CD4-positive, alpha-beta T cell (primary cell): ENCODE measurements at regions of chr4 and their contacts with region 1.

Region 1: DNA sequence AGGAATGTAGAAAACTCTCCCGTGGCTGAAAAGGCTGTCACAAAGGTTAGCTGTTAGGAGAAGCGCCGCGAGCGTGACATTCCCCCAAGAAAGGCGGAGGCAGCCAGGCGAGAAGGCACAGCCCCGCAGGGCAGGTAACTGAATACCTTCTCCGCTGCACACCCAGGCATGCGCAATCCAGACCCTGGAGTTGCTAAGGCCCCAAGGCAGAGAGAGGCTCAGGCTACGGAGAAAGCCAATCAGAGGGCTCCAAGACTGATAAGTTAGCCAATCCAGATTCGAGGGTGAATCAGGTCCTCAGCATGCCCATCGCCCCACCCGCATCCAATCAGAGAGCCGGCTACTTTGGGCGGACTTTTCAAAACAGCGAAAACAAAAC is 485 bp upstream of the CCNG2 start:
- DNase-seq: peak; percentile 90 to 100 (median 96)
- ATAC-seq: peak; percentile 95
- H3K4me3 ChIP-seq: peak overlapping the region; percentile 89
- H3K4me3 Mint-ChIP-seq: peak overlapping the region; percentile 95
- H3K27ac ChIP-seq: peak overlapping the region; percentile 52 to 71
- H3K27ac Mint-ChIP-seq: peak overlapping the region; percentile 97
- H3K4me1 ChIP-seq: peaks cover 20% of the 10 kb centered on the region
- H3K4me1 Mint-ChIP-seq: peaks cover 54% of the 10 kb centered on the region
- H3K27me3 ChIP-seq: no peaks in the 10 kb centered on the region
- H3K27me3 Mint-ChIP-seq: peaks cover 5% of the 10 kb centered on the region
- CTCF ChIP-seq: no peak

Region 2: DNA sequence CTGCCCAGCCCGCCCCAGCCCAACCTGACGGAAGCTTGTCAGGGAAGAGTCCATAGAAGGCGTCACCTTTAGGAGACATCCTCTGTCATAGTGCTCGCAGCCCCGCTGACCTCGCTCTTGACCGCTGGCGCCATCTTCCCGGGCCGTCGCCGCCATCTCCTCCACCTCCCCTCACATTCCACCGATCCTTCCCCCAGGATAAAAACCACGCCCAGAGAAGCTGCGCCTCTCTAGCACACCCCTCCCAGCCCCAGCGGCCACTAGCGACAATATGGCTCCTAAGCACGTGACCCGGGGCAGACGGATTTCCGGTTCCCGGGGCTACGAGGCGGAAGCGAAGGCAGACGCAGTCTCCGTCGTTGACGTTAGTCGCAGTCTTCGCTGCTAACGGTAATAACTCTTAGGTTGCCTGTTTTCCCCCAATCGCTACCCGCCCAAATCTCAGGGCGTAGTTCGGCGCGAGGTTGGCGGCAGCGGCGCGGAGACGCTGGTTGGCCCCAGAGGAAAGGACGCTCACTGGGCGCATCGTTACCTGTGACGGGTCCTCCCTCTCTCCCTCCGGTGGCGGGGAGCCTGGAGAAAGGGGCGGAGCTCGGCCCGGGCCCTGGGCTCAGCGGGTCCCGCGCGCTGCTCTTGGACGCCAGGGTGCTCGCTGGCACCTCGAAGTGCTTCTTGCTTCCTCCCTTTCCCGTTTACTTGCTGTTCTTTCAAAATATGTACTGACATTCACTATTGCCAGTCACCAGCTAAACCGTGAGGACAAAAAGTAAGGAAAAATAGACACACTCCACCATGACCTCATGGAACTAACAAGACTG is 1642.2 kb before region 1 on chr4 and contains the starts of genes RCHY1 and THAP6:
- CTCF ChIA-PET with region 1: no interaction called
- POLR2A ChIA-PET with region 1: no interaction called
- intact Hi-C with region 1: loop called in 1 of 2 experiments (anchors 10 kb)
- DNase-seq: peak; percentile 84 to 97 (median 88)
- ATAC-seq: peak; percentile 86
- H3K4me3 ChIP-seq: peak within 1 kb of the TSS; percentile 77
- H3K4me3 Mint-ChIP-seq: no peak within 1 kb of the TSS
- H3K27ac ChIP-seq: peak within 1 kb of the TSS; percentile 94 to 97
- H3K27ac Mint-ChIP-seq: no peak within 1 kb of the TSS
- H3K4me1 ChIP-seq: peaks cover 21% of the 10 kb centered on the region
- H3K4me1 Mint-ChIP-seq: peaks cover 40% of the 10 kb centered on the region
- H3K27me3 ChIP-seq: no peaks in the 10 kb centered on the region
- H3K27me3 Mint-ChIP-seq: no peaks in the 10 kb centered on the region
- CTCF ChIP-seq: no peak
- total RNA-seq, gene RCHY1: 33.6 to 37.0 TPM
- total RNA-seq, gene THAP6: 19.1 to 22.8 TPM

Region 3: DNA sequence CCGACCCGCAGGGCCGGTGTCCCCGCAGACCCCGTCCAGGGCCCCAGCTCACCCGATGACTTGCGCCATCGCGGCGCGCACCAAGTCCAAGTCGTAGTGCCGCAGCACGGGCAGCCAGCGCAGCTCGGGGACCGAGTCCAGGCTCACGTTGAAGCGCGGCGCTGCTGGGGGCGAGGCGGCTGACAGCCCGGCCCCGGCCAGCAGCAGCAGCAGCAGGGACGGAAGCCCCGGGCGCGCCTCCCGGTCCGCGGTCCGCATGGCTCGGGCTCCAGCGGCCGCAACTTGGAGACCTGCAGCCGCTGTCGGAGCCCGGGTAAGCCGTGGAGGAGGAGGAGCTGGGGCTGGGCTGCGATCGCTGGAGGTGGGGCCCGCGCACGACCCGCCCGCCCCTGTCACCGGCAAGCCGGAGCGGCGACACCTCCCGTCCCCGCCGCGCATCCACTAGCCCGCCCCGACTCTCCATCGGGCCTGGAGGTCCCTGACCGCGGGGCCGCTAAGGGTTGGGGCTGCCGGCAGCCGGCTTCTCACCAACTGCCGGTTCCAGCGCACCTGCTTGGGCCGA is 1215.7 kb before region 1 on chr4 and contains the start of gene NAAA:
- CTCF ChIA-PET with region 1: no interaction called
- POLR2A ChIA-PET with region 1: no interaction called
- intact Hi-C with region 1: loop called in 1 of 2 experiments (anchors 5 kb)
- DNase-seq: peak; percentile 51 to 93 (median 72)
- ATAC-seq: peak; percentile 83
- H3K4me3 ChIP-seq: peak within 1 kb of the TSS; percentile 86
- H3K4me3 Mint-ChIP-seq: peak within 1 kb of the TSS; percentile 100
- H3K27ac ChIP-seq: peak within 1 kb of the TSS; percentile 79 to 86
- H3K27ac Mint-ChIP-seq: peak within 1 kb of the TSS; percentile 95
- H3K4me1 ChIP-seq: peaks cover 20% of the 10 kb centered on the region
- H3K4me1 Mint-ChIP-seq: peaks cover 27% of the 10 kb centered on the region
- H3K27me3 ChIP-seq: no peaks in the 10 kb centered on the region
- H3K27me3 Mint-ChIP-seq: no peaks in the 10 kb centered on the region
- CTCF ChIP-seq: no peak
- total RNA-seq, gene NAAA: 32.6 to 33.3 TPM

Region 4: GRCh38 chr4:76949276-76950051 is 207.1 kb before region 1 on chr4 and contains the start of gene SEPTIN11:
- CTCF ChIA-PET with region 1: no interaction called
- POLR2A ChIA-PET with region 1: interaction called, 3 read pairs
- intact Hi-C with region 1: loop called in 1 of 2 experiments (anchors 5 kb)
- DNase-seq: peak; percentile 65 to 93 (median 78)
- ATAC-seq: peak; percentile 79
- H3K4me3 ChIP-seq: peak within 1 kb of the TSS; percentile 75
- H3K4me3 Mint-ChIP-seq: peak within 1 kb of the TSS; percentile 89
- H3K27ac ChIP-seq: no peak within 1 kb of the TSS
- H3K27ac Mint-ChIP-seq: peak within 1 kb of the TSS; percentile 76
- H3K4me1 ChIP-seq: peaks cover 27% of the 10 kb centered on the region
- H3K4me1 Mint-ChIP-seq: peaks cover 21% of the 10 kb centered on the region
- H3K27me3 ChIP-seq: no peaks in the 10 kb centered on the region
- H3K27me3 Mint-ChIP-seq: no peaks in the 10 kb centered on the region
- CTCF ChIP-seq: no peak
- total RNA-seq, gene SEPTIN11: 8.1 to 9.4 TPM

Region 5: DNA sequence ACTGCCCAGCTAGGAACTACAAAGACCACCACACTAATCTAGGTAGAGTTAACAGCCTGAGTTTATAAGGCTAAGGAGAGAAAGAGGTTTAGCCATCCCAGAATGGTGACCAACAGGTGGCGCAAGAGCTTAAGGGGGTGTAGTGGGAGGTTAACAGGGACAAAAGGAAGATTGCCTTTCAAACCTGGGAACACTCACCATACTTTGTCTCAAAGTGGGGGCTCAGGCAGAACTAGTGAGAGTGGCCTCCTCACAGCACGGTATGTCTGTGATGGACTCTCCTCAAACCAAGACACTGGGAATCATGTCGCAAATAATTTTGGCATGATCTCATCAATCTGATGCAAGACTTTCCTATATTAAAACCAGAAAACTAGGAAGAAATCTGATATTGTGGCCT is 104.2 kb before region 1 on chr4:
- CTCF ChIA-PET with region 1: interaction called, 3 read pairs
- POLR2A ChIA-PET with region 1: no interaction called
- intact Hi-C with region 1: loop called (anchors 5 kb)
- DNase-seq: peak; percentile 35 to 77 (median 60)
- ATAC-seq: peak; percentile 54
- H3K4me3 ChIP-seq: no peak overlapping the region
- H3K4me3 Mint-ChIP-seq: no peak overlapping the region
- H3K27ac ChIP-seq: no peak overlapping the region
- H3K27ac Mint-ChIP-seq: peak overlapping the region; percentile 56
- H3K4me1 ChIP-seq: no peaks in the 10 kb centered on the region
- H3K4me1 Mint-ChIP-seq: peaks cover 8% of the 10 kb centered on the region
- H3K27me3 ChIP-seq: no peaks in the 10 kb centered on the region
- H3K27me3 Mint-ChIP-seq: no peaks in the 10 kb centered on the region
- CTCF ChIP-seq: peak; percentile 29

Region 6: DNA sequence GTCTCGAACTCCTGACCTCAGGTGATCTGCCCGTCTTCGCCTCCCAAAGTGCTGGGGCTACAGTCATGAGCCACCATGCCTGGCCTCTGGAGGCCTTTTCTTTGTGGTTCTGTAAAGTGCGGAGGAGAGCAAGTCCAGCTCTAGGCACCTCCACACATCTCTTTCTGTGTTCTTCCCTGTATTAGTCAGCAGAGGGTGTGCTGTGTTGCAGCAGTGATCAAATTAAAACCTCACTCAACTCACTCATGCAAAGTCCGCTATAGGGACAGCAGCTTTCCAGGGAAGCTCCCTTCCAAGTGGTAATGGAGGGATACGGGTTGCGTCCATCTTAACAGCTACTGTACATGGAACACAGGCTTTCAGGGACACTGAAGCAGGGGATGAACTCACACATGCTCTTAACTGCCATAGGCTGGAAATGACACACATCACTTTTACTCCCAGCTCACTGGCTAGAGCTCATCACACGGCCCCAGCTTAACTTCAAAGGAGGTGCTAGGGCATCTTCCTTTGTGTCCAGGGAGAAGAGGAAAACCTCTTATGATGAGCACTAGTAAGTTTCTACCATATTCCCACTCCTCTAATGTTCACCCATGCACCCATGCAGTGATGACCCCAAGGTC is 35.5 kb before region 1 on chr4:
- CTCF ChIA-PET with region 1: no interaction called
- POLR2A ChIA-PET with region 1: no interaction called
- intact Hi-C with region 1: no loop called
- DNase-seq: peak in 1 of 14 experiments; percentile 17
- ATAC-seq: no peak
- H3K4me3 ChIP-seq: no peak overlapping the region
- H3K4me3 Mint-ChIP-seq: no peak overlapping the region
- H3K27ac ChIP-seq: no peak overlapping the region
- H3K27ac Mint-ChIP-seq: no peak overlapping the region
- H3K4me1 ChIP-seq: no peaks in the 10 kb centered on the region
- H3K4me1 Mint-ChIP-seq: no peaks in the 10 kb centered on the region
- H3K27me3 ChIP-seq: no peaks in the 10 kb centered on the region
- H3K27me3 Mint-ChIP-seq: peaks cover 8% of the 10 kb centered on the region
- CTCF ChIP-seq: no peak

Region 7: DNA sequence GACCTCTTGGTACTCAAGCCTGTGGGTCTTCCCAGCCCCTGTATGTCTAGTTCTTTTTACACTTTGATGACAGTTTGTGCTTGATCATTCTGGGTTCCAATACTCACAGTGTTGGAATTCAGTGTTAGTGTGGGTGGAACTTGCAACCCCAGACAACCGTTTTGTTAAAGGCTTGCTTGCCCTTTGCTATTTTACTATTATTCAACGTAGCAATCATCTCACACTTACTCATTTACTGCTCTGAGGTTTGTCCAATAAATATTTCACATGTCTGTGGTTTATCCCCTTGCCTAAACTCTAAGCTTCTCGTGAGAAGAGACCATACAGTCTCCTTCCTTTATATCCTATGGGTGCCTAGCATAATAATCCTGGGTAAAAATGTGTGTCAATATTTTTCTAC is 15.8 kb after region 1 on chr4:
- CTCF ChIA-PET with region 1: no interaction called
- POLR2A ChIA-PET with region 1: no interaction called
- intact Hi-C with region 1: no loop called
- DNase-seq: no peak
- ATAC-seq: no peak
- H3K4me3 ChIP-seq: no peak overlapping the region
- H3K4me3 Mint-ChIP-seq: no peak overlapping the region
- H3K27ac ChIP-seq: no peak overlapping the region
- H3K27ac Mint-ChIP-seq: no peak overlapping the region
- H3K4me1 ChIP-seq: no peaks in the 10 kb centered on the region
- H3K4me1 Mint-ChIP-seq: no peaks in the 10 kb centered on the region
- H3K27me3 ChIP-seq: no peaks in the 10 kb centered on the region
- H3K27me3 Mint-ChIP-seq: no peaks in the 10 kb centered on the region
- CTCF ChIP-seq: no peak

Region 8: GRCh38 chr4:77193511-77194102 is 37.1 kb after region 1 on chr4:
- CTCF ChIA-PET with region 1: no interaction called
- POLR2A ChIA-PET with region 1: interaction called, 22 read pairs
- intact Hi-C with region 1: loop called in 1 of 2 experiments (anchors 2 kb)
- DNase-seq: peak; percentile 49 to 88 (median 69)
- ATAC-seq: peak; percentile 99
- H3K4me3 ChIP-seq: peak overlapping the region; percentile 51
- H3K4me3 Mint-ChIP-seq: peak overlapping the region; percentile 88
- H3K27ac ChIP-seq: peak overlapping the region in 1 of 2 donors; percentile 68
- H3K27ac Mint-ChIP-seq: peak overlapping the region; percentile 89
- H3K4me1 ChIP-seq: peaks cover 17% of the 10 kb centered on the region
- H3K4me1 Mint-ChIP-seq: peaks cover 24% of the 10 kb centered on the region
- H3K27me3 ChIP-seq: no peaks in the 10 kb centered on the region
- H3K27me3 Mint-ChIP-seq: no peaks in the 10 kb centered on the region
- CTCF ChIP-seq: no peak

Region 9: GRCh38 chr4:77481856-77482255 is 325.3 kb after region 1 on chr4:
- CTCF ChIA-PET with region 1: no interaction called
- POLR2A ChIA-PET with region 1: no interaction called
- intact Hi-C with region 1: no loop called
- DNase-seq: no peak
- ATAC-seq: no peak
- H3K4me3 ChIP-seq: no peak overlapping the region
- H3K4me3 Mint-ChIP-seq: no peak overlapping the region
- H3K27ac ChIP-seq: no peak overlapping the region
- H3K27ac Mint-ChIP-seq: no peak overlapping the region
- H3K4me1 ChIP-seq: no peaks in the 10 kb centered on the region
- H3K4me1 Mint-ChIP-seq: no peaks in the 10 kb centered on the region
- H3K27me3 ChIP-seq: no peaks in the 10 kb centered on the region
- H3K27me3 Mint-ChIP-seq: peaks cover 8% of the 10 kb centered on the region
- CTCF ChIP-seq: no peak